H1 (cell line): ENCODE measurements at regions of chr3 and their contacts with region 1.

Region 1: GRCh38 chr3:4720279-4721075 is 227.3 kb downstream of the ITPR1 start:
- DNase-seq: peak in 1 of 2 experiments; percentile 52
- H3K4me3 ChIP-seq: no peak overlapping the region; a peak in 2 of 8 replicates
- H3K27ac ChIP-seq: no peak overlapping the region
- H3K4me1 ChIP-seq: peaks cover 3 to 11% (median 6%) of the 10 kb centered on the region in 4 experiments; a peak in 4 of 7 replicates
- H3K27me3 ChIP-seq: no peaks in the 10 kb centered on the region
- CTCF ChIP-seq: peak; percentile 22 to 60 (median 59)
- EP300 ChIP-seq: no peak
- POLR2A ChIP-seq: no peak
- RAD21 ChIP-seq: peak; percentile 79 to 81

Region 2: GRCh38 chr3:4703054-4703480 is 17.4 kb before region 1 on chr3:
- CTCF ChIA-PET with region 1: interaction called, 12 read pairs
- POLR2A ChIA-PET with region 1: no interaction called
- DNase-seq: no peak
- H3K4me3 ChIP-seq: no peak overlapping the region
- H3K27ac ChIP-seq: no peak overlapping the region
- H3K4me1 ChIP-seq: peaks cover 0 to 3% (median 0%) of the 10 kb centered on the region in 4 experiments; a peak in 1 of 7 replicates
- H3K27me3 ChIP-seq: no peaks in the 10 kb centered on the region
- CTCF ChIP-seq: no peak
- EP300 ChIP-seq: no peak
- POLR2A ChIP-seq: no peak
- RAD21 ChIP-seq: no peak

Region 3: GRCh38 chr3:4741404-4742307 is 21.2 kb after region 1 on chr3:
- CTCF ChIA-PET with region 1: interaction called, 10 read pairs
- POLR2A ChIA-PET with region 1: no interaction called
- DNase-seq: no peak
- H3K4me3 ChIP-seq: no peak overlapping the region
- H3K27ac ChIP-seq: no peak overlapping the region
- H3K4me1 ChIP-seq: no peaks in the 10 kb centered on the region
- H3K27me3 ChIP-seq: no peaks in the 10 kb centered on the region
- CTCF ChIP-seq: no peak
- EP300 ChIP-seq: no peak
- POLR2A ChIP-seq: no peak
- RAD21 ChIP-seq: no peak

Region 4: GRCh38 chr3:4756855-4757574 is 36.5 kb after region 1 on chr3:
- CTCF ChIA-PET with region 1: interaction called, 13 read pairs
- POLR2A ChIA-PET with region 1: no interaction called
- DNase-seq: no peak
- H3K4me3 ChIP-seq: no peak overlapping the region
- H3K27ac ChIP-seq: no peak overlapping the region
- H3K4me1 ChIP-seq: no peaks in the 10 kb centered on the region
- H3K27me3 ChIP-seq: no peaks in the 10 kb centered on the region
- CTCF ChIP-seq: no peak
- EP300 ChIP-seq: no peak
- POLR2A ChIP-seq: no peak
- RAD21 ChIP-seq: no peak

Region 5: GRCh38 chr3:4986782-4987537 is 266.5 kb after region 1 on chr3:
- CTCF ChIA-PET with region 1: interaction called, 24 read pairs
- POLR2A ChIA-PET with region 1: no interaction called
- DNase-seq: peak; percentile 85 to 90
- H3K4me3 ChIP-seq: peak overlapping the region; percentile 40 to 67 (median 60)
- H3K27ac ChIP-seq: no peak overlapping the region
- H3K4me1 ChIP-seq: peaks cover 0 to 8% (median 5%) of the 10 kb centered on the region in 4 experiments; a peak in 4 of 7 replicates
- H3K27me3 ChIP-seq: peaks cover 0 to 7% (median 6%) of the 10 kb centered on the region in 4 experiments; a peak in 4 of 7 replicates
- CTCF ChIP-seq: no peak
- EP300 ChIP-seq: peak in 1 of 2 experiments; percentile 52; a peak in 1 of 3 replicates
- POLR2A ChIP-seq: peak in 1 of 2 experiments; percentile 42; a peak in 1 of 3 replicates
- RAD21 ChIP-seq: 0 out of 4 replicates have a peak, but pooled peaks of 1 of the 2 experiments have one; percentile 10

Region 6: DNA sequence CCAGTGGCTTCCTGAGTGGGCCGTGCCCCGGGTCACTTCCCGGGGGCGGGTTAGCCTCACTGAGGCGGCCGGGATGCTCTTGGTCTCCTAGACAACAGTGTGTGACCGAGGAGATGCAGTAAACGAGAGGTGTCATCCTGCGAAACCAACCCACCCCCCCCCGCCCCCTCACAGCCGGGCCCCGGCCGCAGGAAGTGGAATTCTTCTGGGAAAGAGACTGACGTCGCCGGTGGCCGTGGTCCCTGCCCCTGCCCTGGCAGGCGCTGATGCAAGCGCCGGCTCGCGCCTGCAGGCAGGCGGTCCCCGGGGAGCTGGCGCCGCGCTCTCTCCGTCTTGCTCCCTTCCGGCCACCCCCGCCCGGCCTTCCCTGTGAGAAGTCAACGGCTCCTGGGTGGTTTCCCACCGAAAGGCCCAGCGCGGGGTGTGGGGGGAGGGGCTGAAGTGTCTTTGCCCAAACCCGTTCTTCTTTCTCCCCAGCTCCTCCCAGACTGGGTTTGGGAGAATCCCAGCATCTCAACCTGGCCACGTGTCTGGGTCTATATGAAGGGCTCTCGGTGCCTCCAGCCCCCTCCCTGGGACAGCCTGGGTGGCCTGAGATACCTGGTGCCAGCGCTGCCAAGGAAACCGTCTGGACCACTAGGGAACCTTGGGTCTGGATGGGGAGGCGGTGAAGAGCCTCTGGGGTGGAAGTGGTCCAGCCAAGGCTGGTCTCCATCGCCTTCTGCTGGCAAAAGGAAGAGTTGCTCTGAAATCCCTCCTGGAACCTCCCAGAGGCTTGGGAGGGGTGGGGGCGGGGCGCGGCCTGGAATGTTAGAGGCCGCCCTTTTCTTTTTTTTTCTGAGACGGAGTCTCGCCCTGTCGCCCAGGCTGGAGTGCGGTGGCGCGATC is 306.1 kb after region 1 on chr3:
- CTCF ChIA-PET with region 1: interaction called, 11 read pairs
- POLR2A ChIA-PET with region 1: interaction called, 3 read pairs
- DNase-seq: peak; percentile 84 to 85
- H3K4me3 ChIP-seq: peak overlapping the region; percentile 21 to 89 (median 63)
- H3K27ac ChIP-seq: no peak overlapping the region
- H3K4me1 ChIP-seq: peaks cover 0 to 5% (median 1%) of the 10 kb centered on the region in 4 experiments; a peak in 2 of 7 replicates
- H3K27me3 ChIP-seq: no peaks in the 10 kb centered on the region
- CTCF ChIP-seq: peak; percentile 67 to 89 (median 73)
- EP300 ChIP-seq: 0 out of 3 replicates have a peak, but pooled peaks of 1 of the 2 experiments have one; percentile 6
- POLR2A ChIP-seq: peak in 1 of 2 experiments; percentile 50; a peak in 1 of 3 replicates
- RAD21 ChIP-seq: peak; percentile 91 to 93